ENCODE measurements at regions of chr3 and their contacts with region 1.

Region 1: GRCh38 chr3:126389112-126389793 is 5.5 kb upstream of the CFAP100 start:
- DNase-seq: peak; percentile 98
- ATAC-seq: peak; percentile 91 to 96
- H3K4me3 ChIP-seq: peak overlapping the region; percentile 33 to 52 (median 45)
- H3K27ac ChIP-seq: peak overlapping the region; percentile 90 to 97 (median 90)
- H3K4me1 ChIP-seq: peaks cover 9 to 14% of the 10 kb centered on the region in 2 donors
- H3K27me3 ChIP-seq: peaks cover 0 to 2% (median 0%) of the 10 kb centered on the region in 3 donors
- CTCF ChIP-seq: peak; percentile 88 to 100 (median 99)
- POLR2A ChIP-seq: peak; percentile 88 to 95

Region 2: DNA sequence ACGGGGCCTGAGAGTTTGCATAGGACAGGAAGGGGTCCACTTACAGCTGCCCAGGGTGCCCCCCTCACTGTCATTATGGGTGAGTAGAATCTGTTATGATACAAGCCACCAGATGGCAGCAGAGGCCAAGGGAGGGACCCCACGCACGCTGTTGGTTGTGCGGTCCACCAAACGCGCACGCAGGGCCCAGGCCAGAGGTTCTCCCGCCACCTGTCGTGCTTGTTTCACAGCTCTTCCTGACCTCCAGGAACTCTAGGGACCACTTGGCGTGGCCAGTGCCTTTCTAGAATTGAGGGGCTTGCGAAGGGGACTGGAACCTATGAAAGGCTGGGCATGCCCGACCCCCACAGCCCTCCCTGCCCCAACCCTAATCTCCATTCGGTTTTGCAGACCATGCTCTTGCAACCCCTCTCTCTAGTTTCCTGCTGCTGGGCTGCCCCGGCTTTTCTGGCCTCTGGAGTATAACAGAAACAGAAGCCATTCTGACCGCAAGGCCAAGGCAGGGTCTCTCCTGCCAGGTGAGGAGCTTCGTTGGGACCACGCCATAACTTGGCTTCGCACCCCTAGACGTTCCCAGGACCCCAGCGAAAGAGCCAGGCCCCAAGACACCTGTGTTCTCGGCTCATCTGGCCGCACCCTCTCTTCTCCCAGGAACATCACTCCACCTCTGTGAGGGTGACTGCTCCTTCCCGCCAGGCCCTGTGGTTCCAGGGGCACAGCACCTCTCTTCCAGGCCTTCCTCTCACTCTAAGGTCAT is 254.9 kb before region 1 on chr3:
- in situ Hi-C with region 1: loop called in 2 of 4 experiments (anchors 5 to 25 kb)
- intact Hi-C with region 1: loop called (anchors 1 kb)
- DNase-seq: peak; percentile 25 to 73
- ATAC-seq: peak; percentile 80 to 93
- H3K4me3 ChIP-seq: no peak overlapping the region
- H3K27ac ChIP-seq: peak overlapping the region in 2 of 4 donors; percentile 12 to 14
- H3K4me1 ChIP-seq: no peaks in the 10 kb centered on the region
- H3K27me3 ChIP-seq: no peaks in the 10 kb centered on the region
- CTCF ChIP-seq: peak; percentile 87 to 96 (median 91)
- POLR2A ChIP-seq: no peak

Region 3: GRCh38 chr3:126197854-126198584 is 191.2 kb before region 1 on chr3:
- in situ Hi-C with region 1: no loop called
- intact Hi-C with region 1: loop called (anchors 1 kb)
- DNase-seq: peak; percentile 68 to 82
- ATAC-seq: peak; percentile 97 to 100
- H3K4me3 ChIP-seq: peak overlapping the region in 1 of 4 donors; percentile 15
- H3K27ac ChIP-seq: peak overlapping the region; percentile 27 to 65 (median 44)
- H3K4me1 ChIP-seq: peaks cover 0 to 8% of the 10 kb centered on the region in 2 donors
- H3K27me3 ChIP-seq: no peaks in the 10 kb centered on the region
- CTCF ChIP-seq: peak; percentile 75 to 86 (median 80)
- POLR2A ChIP-seq: no peak

Region 4: DNA sequence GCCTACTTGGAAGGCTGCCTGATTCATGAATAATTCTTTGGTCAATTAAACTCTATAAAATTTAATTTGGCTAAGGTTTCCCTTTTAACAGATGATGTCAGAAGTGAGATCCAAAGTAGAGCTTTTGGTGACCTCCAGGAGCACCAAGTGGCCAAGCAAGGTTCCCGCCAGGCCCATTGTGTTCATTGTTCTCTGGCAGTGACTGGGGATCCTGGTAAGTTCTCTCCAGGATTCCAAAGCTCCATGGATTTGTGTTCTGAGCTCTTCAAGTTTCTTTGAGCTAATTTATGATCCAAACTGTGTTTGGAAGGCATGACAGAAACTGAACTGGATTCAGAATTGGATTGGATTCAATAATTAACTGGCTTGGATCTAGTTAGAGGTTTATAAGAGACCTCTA is 136.9 kb before region 1 on chr3:
- in situ Hi-C with region 1: loop called (anchors 5 to 10 kb)
- intact Hi-C with region 1: no loop called
- DNase-seq: no peak
- ATAC-seq: no peak
- H3K4me3 ChIP-seq: no peak overlapping the region
- H3K27ac ChIP-seq: no peak overlapping the region
- H3K4me1 ChIP-seq: no peaks in the 10 kb centered on the region
- H3K27me3 ChIP-seq: no peaks in the 10 kb centered on the region
- CTCF ChIP-seq: no peak
- POLR2A ChIP-seq: no peak

Region 5: DNA sequence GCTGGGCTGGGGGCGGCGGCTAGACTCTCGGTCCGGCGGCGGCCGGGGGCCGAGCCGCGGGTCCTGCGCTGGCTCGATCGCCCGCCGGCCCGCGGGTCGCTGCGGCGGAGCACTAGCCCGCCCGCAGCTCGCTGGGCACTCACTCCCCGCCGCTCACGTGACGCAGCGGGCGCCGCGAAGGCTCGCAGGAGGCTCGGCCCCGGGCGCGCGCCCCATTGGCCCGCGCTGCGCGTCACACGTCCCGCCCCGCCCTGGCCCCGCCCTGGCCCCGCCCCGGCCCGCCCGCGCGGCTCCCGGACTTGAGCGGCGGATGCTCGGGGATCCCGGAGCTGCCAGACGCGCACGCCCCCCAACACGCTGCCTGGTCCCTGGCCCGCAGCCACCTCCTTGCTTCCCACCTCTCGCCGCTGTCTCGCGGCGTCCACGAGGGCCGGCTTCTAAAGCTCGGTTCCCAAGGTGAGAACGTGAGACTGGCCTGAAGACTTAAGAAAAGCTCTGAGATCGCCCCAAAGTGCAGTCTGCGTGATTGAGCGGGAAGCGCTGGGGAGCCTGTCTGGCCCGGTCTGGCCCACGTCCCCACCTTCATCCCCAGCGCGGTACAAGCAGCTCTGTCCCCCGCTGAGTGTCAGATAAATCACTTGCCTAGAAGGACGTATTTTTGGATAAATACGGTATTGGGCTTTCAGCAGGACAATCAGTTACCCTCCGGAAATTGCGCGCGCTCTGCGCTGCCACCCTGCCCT is 31.8 kb before region 1 on chr3 and contains the start of gene KLF15:
- in situ Hi-C with region 1: no loop called
- intact Hi-C with region 1: loop called (anchors 1 kb)
- DNase-seq: peak; percentile 81 to 92
- ATAC-seq: peak; percentile 37 to 48
- H3K4me3 ChIP-seq: peak within 1 kb of the TSS; percentile 82 to 98 (median 89)
- H3K27ac ChIP-seq: peak within 1 kb of the TSS; percentile 91 to 99 (median 98)
- H3K4me1 ChIP-seq: peaks cover 35 to 48% of the 10 kb centered on the region in 2 donors
- H3K27me3 ChIP-seq: no peaks in the 10 kb centered on the region
- CTCF ChIP-seq: peak in 1 of 5 experiments; percentile 8
- POLR2A ChIP-seq: peak; percentile 98 to 100
- total RNA-seq, gene KLF15: 75.1 to 157 (median 106) TPM

Region 6: GRCh38 chr3:126461450-126462070 is 72.3 kb after region 1 on chr3:
- in situ Hi-C with region 1: no loop called
- intact Hi-C with region 1: loop called (anchors 2 kb)
- DNase-seq: no peak
- ATAC-seq: peak; percentile 3
- H3K4me3 ChIP-seq: no peak overlapping the region
- H3K27ac ChIP-seq: peak overlapping the region; percentile 94 to 97 (median 96)
- H3K4me1 ChIP-seq: peaks cover 71 to 74% of the 10 kb centered on the region in 2 donors
- H3K27me3 ChIP-seq: no peaks in the 10 kb centered on the region
- CTCF ChIP-seq: no peak
- POLR2A ChIP-seq: no peak

Region 7: GRCh38 chr3:126567696-126568438 is 178.6 kb after region 1 on chr3:
- in situ Hi-C with region 1: no loop called
- intact Hi-C with region 1: no loop called
- DNase-seq: no peak
- ATAC-seq: no peak
- H3K4me3 ChIP-seq: no peak overlapping the region
- H3K27ac ChIP-seq: no peak overlapping the region
- H3K4me1 ChIP-seq: peaks cover 0 to 2% of the 10 kb centered on the region in 2 donors
- H3K27me3 ChIP-seq: no peaks in the 10 kb centered on the region
- CTCF ChIP-seq: no peak
- POLR2A ChIP-seq: no peak